ENCODE measurements at regions of chr19 and their contacts with region 1.

Region 1: GRCh38 chr19:41821003-41821735 is 23.3 kb downstream of the LYPD4 start:
- DNase-seq: peak; percentile 82
- ATAC-seq: peak; percentile 82
- H3K4me3 ChIP-seq: no peak overlapping the region
- H3K4me3 Mint-ChIP-seq: no peak overlapping the region
- H3K27ac ChIP-seq: no peak overlapping the region
- H3K27ac Mint-ChIP-seq: no peak overlapping the region
- H3K4me1 ChIP-seq: no peaks in the 10 kb centered on the region
- H3K4me1 Mint-ChIP-seq: peaks cover 3% of the 10 kb centered on the region
- H3K27me3 ChIP-seq: peaks cover 0 to 3% (median 0%) of the 10 kb centered on the region in 4 experiments
- H3K27me3 Mint-ChIP-seq: peaks cover 19% of the 10 kb centered on the region
- CTCF ChIP-seq: peak; percentile 89

Region 2: GRCh38 chr19:41641879-41642485 is 179.2 kb before region 1 on chr19:
- CTCF ChIA-PET with region 1: interaction called, 5 read pairs
- POLR2A ChIA-PET with region 1: no interaction called
- intact Hi-C with region 1: loop called (anchors 5 kb)
- DNase-seq: peak; percentile 73
- ATAC-seq: peak; percentile 65
- H3K4me3 ChIP-seq: no peak overlapping the region
- H3K4me3 Mint-ChIP-seq: no peak overlapping the region
- H3K27ac ChIP-seq: no peak overlapping the region
- H3K27ac Mint-ChIP-seq: no peak overlapping the region
- H3K4me1 ChIP-seq: no peaks in the 10 kb centered on the region
- H3K4me1 Mint-ChIP-seq: no peaks in the 10 kb centered on the region
- H3K27me3 ChIP-seq: peaks cover 0 to 21% (median 5%) of the 10 kb centered on the region in 4 experiments
- H3K27me3 Mint-ChIP-seq: peaks cover 40% of the 10 kb centered on the region
- CTCF ChIP-seq: peak; percentile 98

Region 3: GRCh38 chr19:41785653-41786052 is 35.5 kb before region 1 on chr19:
- CTCF ChIA-PET with region 1: interaction called, 249 read pairs
- POLR2A ChIA-PET with region 1: no interaction called
- intact Hi-C with region 1: loop called (anchors 2 kb)
- DNase-seq: peak; percentile 84
- ATAC-seq: peak; percentile 93
- H3K4me3 ChIP-seq: peak overlapping the region in 2 of 5 experiments; percentile 11 to 22
- H3K4me3 Mint-ChIP-seq: peak overlapping the region; percentile 74
- H3K27ac ChIP-seq: no peak overlapping the region
- H3K27ac Mint-ChIP-seq: no peak overlapping the region
- H3K4me1 ChIP-seq: peaks cover 24 to 26% of the 10 kb centered on the region in 2 donors
- H3K4me1 Mint-ChIP-seq: peaks cover 25% of the 10 kb centered on the region
- H3K27me3 ChIP-seq: peaks cover 0 to 10% (median 0%) of the 10 kb centered on the region in 4 experiments
- H3K27me3 Mint-ChIP-seq: peaks cover 32% of the 10 kb centered on the region
- CTCF ChIP-seq: peak; percentile 88

Region 4: GRCh38 chr19:41801792-41802211 is 19.4 kb before region 1 on chr19:
- CTCF ChIA-PET with region 1: interaction called, 16 read pairs
- POLR2A ChIA-PET with region 1: no interaction called
- intact Hi-C with region 1: no loop called
- DNase-seq: peak; percentile 68
- ATAC-seq: peak; percentile 53
- H3K4me3 ChIP-seq: peak overlapping the region in 2 of 5 experiments; percentile 1 to 15
- H3K4me3 Mint-ChIP-seq: peak overlapping the region; percentile 50
- H3K27ac ChIP-seq: peak overlapping the region; percentile 37 to 81
- H3K27ac Mint-ChIP-seq: peak overlapping the region; percentile 86
- H3K4me1 ChIP-seq: peaks cover 29 to 46% of the 10 kb centered on the region in 2 donors
- H3K4me1 Mint-ChIP-seq: peaks cover 41% of the 10 kb centered on the region
- H3K27me3 ChIP-seq: no peaks in the 10 kb centered on the region
- H3K27me3 Mint-ChIP-seq: no peaks in the 10 kb centered on the region
- CTCF ChIP-seq: no peak

Region 5: GRCh38 chr19:41837981-41838708 is 17.0 kb after region 1 on chr19:
- CTCF ChIA-PET with region 1: interaction called, 14 read pairs
- POLR2A ChIA-PET with region 1: interaction called, 5 read pairs
- intact Hi-C with region 1: no loop called
- DNase-seq: no peak
- ATAC-seq: no peak
- H3K4me3 ChIP-seq: no peak overlapping the region
- H3K4me3 Mint-ChIP-seq: no peak overlapping the region
- H3K27ac ChIP-seq: no peak overlapping the region
- H3K27ac Mint-ChIP-seq: no peak overlapping the region
- H3K4me1 ChIP-seq: no peaks in the 10 kb centered on the region
- H3K4me1 Mint-ChIP-seq: no peaks in the 10 kb centered on the region
- H3K27me3 ChIP-seq: peaks cover 0 to 30% (median 10%) of the 10 kb centered on the region in 4 experiments
- H3K27me3 Mint-ChIP-seq: peaks cover 33% of the 10 kb centered on the region
- CTCF ChIP-seq: no peak

Measured in B cell (primary cell).